Posterior cingulate gyrus (tissue), 11 donors: ENCODE measurements at regions of chr7 and their contacts with region 1.

Region 1: GRCh38 chr7:22255834-22256233 is 101.1 kb downstream of the RAPGEF5 start:
- DNase-seq: no peak

Region 2: GRCh38 chr7:22110227-22110839 is 145.5 kb before region 1 on chr7:
- intact Hi-C with region 1: loop called (anchors 2 kb)
- DNase-seq: peak in 8 of 10 donors; percentile 61 to 95 (median 81)

Region 3: GRCh38 chr7:22173685-22174573 is 81.9 kb before region 1 on chr7:
- intact Hi-C with region 1: no loop called
- DNase-seq: peak in 1 of 10 donors; percentile 69

Region 4: GRCh38 chr7:22193450-22193983 is 62.3 kb before region 1 on chr7:
- intact Hi-C with region 1: loop called (anchors 10 kb)
- DNase-seq: peak; percentile 63 to 95 (median 72)

Region 5: DNA sequence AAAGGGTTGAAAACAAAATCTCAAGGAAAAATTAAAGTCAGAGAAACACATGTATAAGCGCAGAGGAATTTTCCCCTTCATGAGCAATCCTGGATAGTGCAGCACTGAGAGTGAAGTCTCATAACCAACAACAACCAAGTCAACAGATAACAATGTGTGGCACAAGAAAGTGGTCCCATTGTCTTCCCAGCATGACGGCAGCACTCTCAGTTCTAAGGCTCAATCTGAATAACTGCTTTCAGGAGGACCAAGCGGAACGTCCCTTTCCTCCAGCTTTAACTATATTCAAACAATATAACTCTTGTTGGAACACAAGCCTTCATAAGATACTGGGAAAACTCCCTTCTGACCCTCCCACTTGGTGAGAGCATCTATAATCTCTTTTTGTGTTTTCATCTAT is 36.8 kb before region 1 on chr7:
- intact Hi-C with region 1: loop called (anchors 5 kb)
- DNase-seq: peak in 7 of 10 donors; percentile 35 to 92 (median 51)

Region 6: GRCh38 chr7:22751341-22751740 is 495.5 kb after region 1 on chr7:
- intact Hi-C with region 1: no loop called
- DNase-seq: no peak